Left cardiac atrium (tissue), 4 donors: ENCODE measurements at regions of chr5 and their contacts with region 1.

Region 1: DNA sequence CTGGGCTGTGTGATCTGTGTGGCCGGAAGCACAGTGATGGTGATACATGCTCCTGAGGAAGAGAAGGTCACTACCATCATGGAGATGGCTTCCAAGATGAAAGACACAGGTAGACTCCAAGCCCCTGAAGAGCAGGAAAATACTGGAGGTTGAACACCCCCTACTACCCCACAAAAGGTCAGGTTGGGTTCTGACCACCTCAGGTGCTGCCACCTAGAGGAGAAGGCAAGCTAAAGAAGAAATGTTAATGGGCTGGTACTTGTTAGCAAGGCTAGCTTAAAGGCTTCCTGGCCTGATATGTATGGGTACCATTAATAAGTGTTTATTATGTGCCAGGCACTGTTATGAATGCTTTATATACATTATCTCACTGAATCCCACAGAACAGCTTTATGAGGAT is 11.7 kb downstream of the NIPAL4 start:
- DNase-seq: no peak
- ATAC-seq: no peak

Region 2: GRCh38 chr5:157366741-157367674 is 104.7 kb before region 1 on chr5:
- intact Hi-C with region 1: loop called (anchors 5 kb)
- DNase-seq: no peak
- ATAC-seq: peak; percentile 66 to 84

Region 3: GRCh38 chr5:157431544-157432200 is 40.0 kb before region 1 on chr5:
- intact Hi-C with region 1: loop called (anchors 2 to 5 kb)
- DNase-seq: no peak
- ATAC-seq: peak; percentile 76 to 85

Region 4: GRCh38 chr5:157934600-157934999 is 462.9 kb after region 1 on chr5:
- intact Hi-C with region 1: no loop called
- DNase-seq: no peak
- ATAC-seq: no peak